A549 (cell line): ENCODE measurements at regions of chr17 and their contacts with region 1.

Region 1: GRCh38 chr17:74457146-74457819 is 9.2 kb upstream of the CD300A start:
- DNase-seq: peak; percentile 72 to 82
- ATAC-seq: peak; percentile 32 to 59; a peak in 4 of 6 replicates
- H3K4me3 ChIP-seq: no peak overlapping the region
- H3K27ac ChIP-seq: peak overlapping the region in 1 of 2 experiments; percentile 59; a peak in 3 of 6 replicates
- H3K4me1 ChIP-seq: peaks cover 16% of the 10 kb centered on the region
- CTCF ChIP-seq: peak; percentile 99
- EP300 ChIP-seq: no peak
- POLR2A ChIP-seq: no peak
- RAD21 ChIP-seq: peak; percentile 100

Region 2: DNA sequence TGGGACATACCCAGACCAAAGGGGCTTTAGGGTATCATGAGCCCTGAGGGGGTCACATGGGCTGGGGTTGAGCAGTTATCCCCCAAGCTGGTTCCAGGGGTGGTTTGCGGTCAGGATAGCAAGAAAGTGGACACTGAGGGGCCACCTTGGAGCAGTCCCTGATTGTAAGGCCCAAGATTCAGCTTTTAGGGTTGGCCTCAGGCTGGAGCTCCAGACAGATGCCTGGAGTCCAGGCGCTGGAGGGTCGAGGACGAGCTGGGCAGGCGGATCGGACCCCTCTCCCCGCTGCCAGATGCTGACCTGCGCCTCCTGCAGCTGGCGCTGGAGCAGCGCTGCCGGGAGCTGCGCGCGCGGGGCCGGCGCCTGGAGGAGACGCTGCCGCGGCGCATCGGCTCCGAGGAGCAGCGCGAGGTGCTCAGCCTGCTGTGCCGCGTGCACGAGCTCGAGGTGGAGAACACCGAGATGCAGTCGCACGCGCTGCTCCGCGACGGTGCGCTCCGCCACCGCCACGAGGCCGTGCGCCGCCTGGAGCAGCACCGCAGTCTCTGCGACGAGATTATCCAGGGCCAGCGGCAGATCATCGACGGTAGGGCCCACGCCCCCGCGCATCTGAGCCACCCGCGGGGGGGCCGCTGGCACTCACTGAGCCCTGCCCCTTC is 105.6 kb before region 1 on chr17:
- CTCF ChIA-PET with region 1: interaction called, 26 read pairs
- POLR2A ChIA-PET with region 1: no interaction called
- DNase-seq: peak in 1 of 2 experiments; percentile 66
- ATAC-seq: peak; percentile 59 to 69
- H3K4me3 ChIP-seq: peak overlapping the region; percentile 10; the same call in 1 of the 3 replicates
- H3K27ac ChIP-seq: no peak overlapping the region
- H3K4me1 ChIP-seq: 0 out of 3 replicates have a peak, but pooled peaks cover 11% of the 10 kb centered on the region
- CTCF ChIP-seq: peak; percentile 26; the same call in 2 of the 3 replicates
- EP300 ChIP-seq: no peak
- POLR2A ChIP-seq: no peak
- RAD21 ChIP-seq: no peak

Region 3: GRCh38 chr17:74424657-74425056 is 32.6 kb before region 1 on chr17:
- CTCF ChIA-PET with region 1: interaction called, 39 read pairs
- POLR2A ChIA-PET with region 1: interaction called, 16 read pairs
- DNase-seq: no peak
- ATAC-seq: no peak
- H3K4me3 ChIP-seq: no peak overlapping the region
- H3K27ac ChIP-seq: 0 out of 6 replicates have a peak overlapping the region, but pooled peaks of 1 of the 2 experiments have one; percentile 23
- H3K4me1 ChIP-seq: peaks cover 20% of the 10 kb centered on the region
- CTCF ChIP-seq: no peak
- EP300 ChIP-seq: no peak
- POLR2A ChIP-seq: no peak
- RAD21 ChIP-seq: no peak

Region 4: GRCh38 chr17:74442670-74443515 is 14.4 kb before region 1 on chr17:
- CTCF ChIA-PET with region 1: interaction called, 109 read pairs
- POLR2A ChIA-PET with region 1: interaction called, 4 read pairs
- DNase-seq: peak in 1 of 2 experiments; percentile 66
- ATAC-seq: peak; percentile 58 to 70
- H3K4me3 ChIP-seq: no peak overlapping the region
- H3K27ac ChIP-seq: peak overlapping the region; percentile 16 to 61; a peak in 5 of 6 replicates
- H3K4me1 ChIP-seq: peaks cover 17% of the 10 kb centered on the region
- CTCF ChIP-seq: no peak
- EP300 ChIP-seq: no peak
- POLR2A ChIP-seq: no peak
- RAD21 ChIP-seq: no peak

Region 5: DNA sequence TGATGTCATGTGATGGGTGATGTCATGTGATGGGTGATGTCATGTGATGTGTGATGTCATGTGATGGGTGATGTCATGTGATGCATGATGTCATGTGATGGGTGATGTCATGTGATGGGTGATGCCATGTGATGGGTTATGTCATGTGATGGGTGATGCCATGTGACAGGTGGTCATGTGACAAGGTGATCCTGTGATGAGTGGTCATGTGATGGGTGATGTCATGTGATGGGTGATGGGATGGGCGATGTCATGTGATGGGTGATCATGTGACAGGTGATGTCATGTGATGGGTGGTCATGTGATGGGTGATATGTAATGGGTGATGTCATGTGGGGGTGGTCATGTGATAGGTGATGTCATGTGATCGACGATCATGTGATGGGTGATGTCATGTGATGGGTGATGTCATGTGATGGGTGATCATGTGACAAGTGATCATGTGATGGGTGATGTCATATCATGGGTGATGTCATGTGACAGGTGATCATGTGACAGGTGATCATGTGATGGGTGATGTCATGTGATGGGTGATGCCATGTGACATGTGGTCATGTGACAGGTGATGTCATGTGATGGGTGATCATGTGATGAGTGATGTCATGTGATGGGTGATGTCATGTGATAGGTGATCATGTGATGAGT is 56.8 kb after region 1 on chr17:
- CTCF ChIA-PET with region 1: interaction called, 11 read pairs
- POLR2A ChIA-PET with region 1: no interaction called
- DNase-seq: peak; percentile 55 to 87
- ATAC-seq: peak; percentile 24 to 44; a peak in 2 of 6 replicates
- H3K4me3 ChIP-seq: no peak overlapping the region
- H3K27ac ChIP-seq: no peak overlapping the region
- H3K4me1 ChIP-seq: no peaks in the 10 kb centered on the region
- CTCF ChIP-seq: no peak
- EP300 ChIP-seq: no peak
- POLR2A ChIP-seq: no peak
- RAD21 ChIP-seq: no peak

Region 6: DNA sequence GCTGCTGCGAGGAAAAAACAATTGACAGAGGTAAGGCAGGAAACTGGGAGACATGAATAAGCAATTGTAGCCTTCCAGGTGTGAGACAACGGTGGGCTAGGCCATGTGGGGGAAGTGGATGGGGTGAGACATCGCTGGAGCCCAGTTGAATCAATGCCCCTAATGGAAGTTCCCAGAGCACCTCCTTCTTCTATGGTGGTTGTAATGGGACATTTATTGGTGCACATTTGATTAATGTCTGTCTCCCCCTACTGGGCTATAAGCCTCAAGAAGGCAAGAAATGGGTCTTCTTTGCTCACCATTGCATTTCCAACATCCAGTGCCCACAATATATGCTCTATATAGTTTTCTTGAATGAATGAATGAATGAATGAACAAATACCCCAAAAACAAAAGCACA is 188.9 kb after region 1 on chr17:
- CTCF ChIA-PET with region 1: interaction called, 10 read pairs
- POLR2A ChIA-PET with region 1: no interaction called
- DNase-seq: peak; percentile 62 to 74
- ATAC-seq: peak in 1 of 2 experiments; percentile 81; a peak in 3 of 6 replicates
- H3K4me3 ChIP-seq: no peak overlapping the region
- H3K27ac ChIP-seq: no peak overlapping the region
- H3K4me1 ChIP-seq: no peaks in the 10 kb centered on the region
- CTCF ChIP-seq: peak; percentile 51
- EP300 ChIP-seq: no peak
- POLR2A ChIP-seq: no peak
- RAD21 ChIP-seq: peak; percentile 38 to 62; a peak in 4 of 5 replicates